ENCODE measurements at regions of chr6 and their contacts with region 1.

Region 1: GRCh38 chr6:119147101-119148053 is 68.9 kb upstream of the FAM184A start:
- DNase-seq: peak; percentile 78
- ATAC-seq: peak; percentile 87
- H3K4me3 Mint-ChIP-seq: no peak overlapping the region
- H3K27ac Mint-ChIP-seq: peak overlapping the region; percentile 27
- H3K4me1 Mint-ChIP-seq: peaks cover 45% of the 10 kb centered on the region
- H3K27me3 Mint-ChIP-seq: peaks cover 5% of the 10 kb centered on the region

Region 2: GRCh38 chr6:119129148-119129967 is 18.0 kb before region 1 on chr6:
- CTCF ChIA-PET with region 1: interaction called, 13 read pairs
- POLR2A ChIA-PET with region 1: no interaction called
- intact Hi-C with region 1: loop called in 1 of 2 experiments (anchors 2 kb)
- DNase-seq: no peak
- ATAC-seq: peak; percentile 86
- H3K4me3 Mint-ChIP-seq: no peak overlapping the region
- H3K27ac Mint-ChIP-seq: no peak overlapping the region
- H3K4me1 Mint-ChIP-seq: peaks cover 6% of the 10 kb centered on the region
- H3K27me3 Mint-ChIP-seq: no peaks in the 10 kb centered on the region

Region 3: GRCh38 chr6:119313937-119314884 is 166.8 kb after region 1 on chr6:
- CTCF ChIA-PET with region 1: interaction called, 4 read pairs
- POLR2A ChIA-PET with region 1: no interaction called
- intact Hi-C with region 1: loop called (anchors 2 to 5 kb)
- DNase-seq: peak; percentile 60
- ATAC-seq: peak; percentile 73
- H3K4me3 Mint-ChIP-seq: peak overlapping the region; percentile 40
- H3K27ac Mint-ChIP-seq: peak overlapping the region; percentile 91
- H3K4me1 Mint-ChIP-seq: peaks cover 56% of the 10 kb centered on the region
- H3K27me3 Mint-ChIP-seq: no peaks in the 10 kb centered on the region

Region 4: GRCh38 chr6:119533603-119534279 is 386.4 kb after region 1 on chr6:
- CTCF ChIA-PET with region 1: no interaction called
- POLR2A ChIA-PET with region 1: no interaction called
- intact Hi-C with region 1: loop called in 1 of 2 experiments (anchors 2 kb)
- DNase-seq: peak; percentile 6
- ATAC-seq: peak; percentile 95
- H3K4me3 Mint-ChIP-seq: no peak overlapping the region
- H3K27ac Mint-ChIP-seq: no peak overlapping the region
- H3K4me1 Mint-ChIP-seq: peaks cover 12% of the 10 kb centered on the region
- H3K27me3 Mint-ChIP-seq: peaks cover 8% of the 10 kb centered on the region

Region 5: DNA sequence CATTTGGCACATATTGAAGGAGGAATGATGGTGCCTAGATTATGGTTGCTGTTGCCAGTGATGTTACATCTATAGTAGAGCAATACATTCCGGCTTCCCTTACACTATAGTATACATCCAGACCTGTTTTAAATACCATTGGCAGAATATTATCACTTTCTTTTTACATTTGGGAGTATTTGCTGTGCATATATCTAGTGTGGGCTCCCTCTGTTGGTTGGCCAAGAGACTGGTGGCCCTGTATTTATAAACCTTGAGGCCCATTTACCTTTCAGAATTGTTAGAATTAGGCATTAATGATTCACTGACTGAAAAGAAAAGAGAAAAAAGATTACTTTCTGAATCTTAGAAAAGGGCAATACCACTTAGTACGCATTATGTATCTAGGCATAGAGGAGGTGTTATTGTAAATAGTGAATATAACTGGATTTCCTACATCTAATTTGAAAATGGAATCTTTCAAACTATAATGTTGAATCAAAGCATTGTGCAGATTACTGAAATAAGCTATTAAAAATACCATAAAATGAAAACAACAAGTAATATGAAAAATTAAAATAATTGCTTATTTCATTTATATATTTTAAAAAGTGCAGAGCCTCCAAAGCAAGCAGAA is 831.0 kb after region 1 on chr6:
- CTCF ChIA-PET with region 1: no interaction called
- POLR2A ChIA-PET with region 1: no interaction called
- intact Hi-C with region 1: loop called in 1 of 2 experiments (anchors 10 kb)
- DNase-seq: peak; percentile 11
- ATAC-seq: no peak
- H3K4me3 Mint-ChIP-seq: no peak overlapping the region
- H3K27ac Mint-ChIP-seq: no peak overlapping the region
- H3K4me1 Mint-ChIP-seq: no peaks in the 10 kb centered on the region
- H3K27me3 Mint-ChIP-seq: no peaks in the 10 kb centered on the region